Tibial artery (tissue), 4 donors: ENCODE measurements at regions of chr5 and their contacts with region 1.

Region 1: GRCh38 chr5:149228618-149229297 is 42.9 kb upstream of the AFAP1L1 start:
- DNase-seq: peak in 1 of 2 donors; percentile 52
- H3K4me3 ChIP-seq: no peak overlapping the region
- H3K27ac ChIP-seq: peak overlapping the region in 1 of 2 donors; percentile 5
- H3K4me1 ChIP-seq: peaks cover 0 to 4% (median 1%) of the 10 kb centered on the region in 4 donors
- H3K27me3 ChIP-seq: no peaks in the 10 kb centered on the region
- CTCF ChIP-seq: peak; percentile 58 to 72

Region 2: GRCh38 chr5:149141224-149141956 is 87.4 kb before region 1 on chr5 and contains the start of gene ABLIM3:
- intact Hi-C with region 1: loop called (anchors 5 kb)
- DNase-seq: peak; percentile 51 to 83
- H3K4me3 ChIP-seq: peak within 1 kb of the TSS; percentile 59 to 83
- H3K27ac ChIP-seq: peak within 1 kb of the TSS; percentile 63
- H3K4me1 ChIP-seq: peaks cover 0 to 25% (median 13%) of the 10 kb centered on the region in 4 donors
- H3K27me3 ChIP-seq: no peaks in the 10 kb centered on the region
- CTCF ChIP-seq: peak; percentile 80 to 83

Region 3: GRCh38 chr5:149195337-149195887 is 33.3 kb before region 1 on chr5:
- intact Hi-C with region 1: no loop called
- DNase-seq: no peak
- H3K4me3 ChIP-seq: no peak overlapping the region
- H3K27ac ChIP-seq: no peak overlapping the region
- H3K4me1 ChIP-seq: no peaks in the 10 kb centered on the region
- H3K27me3 ChIP-seq: no peaks in the 10 kb centered on the region
- CTCF ChIP-seq: no peak